SK-N-SH (cell line): ENCODE measurements at regions of chr17 and their contacts with region 1.

Region 1: DNA sequence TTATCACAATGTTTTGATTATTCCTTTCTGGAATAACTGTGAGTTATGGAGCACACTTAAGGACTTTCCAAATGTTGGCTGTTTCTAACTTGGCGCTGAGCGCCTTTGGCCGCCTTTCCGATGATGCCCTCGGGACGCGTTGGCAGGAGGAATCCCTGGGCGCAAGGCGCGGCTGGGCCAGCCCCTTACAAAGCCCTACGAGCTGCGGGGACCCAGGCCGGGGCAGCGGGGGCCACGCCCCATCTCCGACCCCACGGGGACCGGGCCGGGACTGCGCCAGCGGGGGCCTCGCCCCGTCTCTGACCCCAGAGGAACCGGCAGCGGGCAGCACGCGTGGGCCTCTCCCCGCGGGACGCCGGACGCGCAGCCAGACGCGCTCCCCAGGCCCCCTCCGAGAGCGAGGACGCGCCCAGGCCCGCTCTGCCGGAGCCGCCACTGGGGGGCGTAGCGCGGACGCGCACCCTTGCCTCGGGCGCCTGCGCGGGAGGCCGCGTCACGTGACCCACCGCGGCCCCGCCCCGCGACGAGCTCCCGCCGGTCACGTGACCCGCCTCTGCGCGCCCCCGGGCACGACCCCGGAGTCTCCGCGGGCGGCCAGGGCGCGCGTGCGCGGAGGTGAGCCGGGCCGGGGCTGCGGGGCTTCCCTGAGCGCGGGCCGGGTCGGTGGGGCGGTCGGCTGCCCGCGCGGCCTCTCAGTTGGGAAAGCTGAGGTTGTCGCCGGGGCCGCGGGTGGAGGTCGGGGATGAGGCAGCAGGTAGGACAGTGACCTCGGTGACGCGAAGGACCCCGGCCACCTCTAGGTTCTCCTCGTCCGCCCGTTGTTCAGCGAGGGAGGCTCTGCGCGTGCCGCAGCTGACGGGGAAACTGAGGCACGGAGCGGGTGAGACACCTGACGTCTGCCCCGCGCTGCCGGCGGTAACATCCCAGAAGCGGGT is at the start of gene GAA:
- DNase-seq: peak; percentile 100
- H3K4me3 ChIP-seq: peak within 1 kb of the TSS; percentile 91 to 95
- H3K27ac ChIP-seq: peak within 1 kb of the TSS; percentile 60 to 92
- H3K4me1 ChIP-seq: peaks cover 6 to 34% of the 10 kb centered on the region in 2 experiments; a peak in 3 of 4 replicates
- H3K27me3 ChIP-seq: no peaks in the 10 kb centered on the region
- CTCF ChIP-seq: peak; percentile 72
- EP300 ChIP-seq: no peak; a peak in 1 of 4 replicates
- RAD21 ChIP-seq: peak; percentile 26; the same call in 1 of the 2 replicates
- polyA plus RNA-seq, gene GAA: 19.5 and 27.3 TPM in 2 replicates

Region 2: DNA sequence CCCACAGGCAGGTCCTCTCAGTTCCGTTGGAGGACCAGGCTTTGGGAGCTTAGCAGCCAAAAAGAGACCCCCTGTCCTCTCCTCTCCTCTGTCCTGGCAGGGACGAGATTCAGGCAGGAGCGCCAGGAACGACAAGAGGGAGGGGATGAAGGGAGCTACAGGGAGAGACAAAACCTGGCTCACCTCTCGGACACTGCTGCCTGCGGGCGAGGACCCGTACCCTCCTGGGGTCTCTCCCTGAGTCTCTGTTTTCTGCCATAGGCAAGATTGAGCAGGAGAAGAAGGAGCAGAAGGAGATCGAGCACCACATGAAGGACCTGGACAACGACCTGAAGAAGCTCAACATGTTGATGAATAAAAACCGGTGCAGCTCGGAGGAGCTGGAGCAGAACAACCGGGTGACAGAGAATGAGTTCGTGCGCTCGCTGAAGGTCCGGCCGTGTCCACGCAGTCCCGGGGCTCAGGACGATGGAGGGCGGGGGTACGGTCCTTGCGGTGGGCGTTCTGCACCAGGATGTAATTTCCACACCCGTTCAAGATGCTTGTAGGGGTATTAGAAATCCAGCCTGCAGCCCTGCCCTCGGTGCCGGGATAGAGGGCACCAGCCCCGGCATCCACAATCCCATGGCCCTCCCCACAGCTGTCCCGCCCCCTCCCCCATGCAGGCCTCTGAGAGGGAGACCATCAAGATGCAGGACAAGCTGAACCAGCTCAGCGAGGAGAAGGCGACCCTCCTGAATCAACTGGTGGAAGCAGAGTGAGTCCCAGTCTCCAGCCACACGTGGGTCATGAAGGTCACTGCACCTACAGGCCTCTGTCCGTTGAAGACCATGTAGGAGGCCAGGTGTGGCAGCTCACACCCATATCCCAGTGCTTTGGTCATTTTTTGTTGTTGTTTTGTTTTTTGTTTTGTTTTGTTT is 13.7 kb before region 1 on chr17:
- CTCF ChIA-PET with region 1: interaction called, 86 read pairs
- POLR2A ChIA-PET with region 1: interaction called, 5 read pairs
- DNase-seq: peak; percentile 26
- H3K4me3 ChIP-seq: no peak overlapping the region
- H3K27ac ChIP-seq: no peak overlapping the region
- H3K4me1 ChIP-seq: peaks cover 0 to 6% of the 10 kb centered on the region in 2 experiments; a peak in 1 of 4 replicates
- H3K27me3 ChIP-seq: no peaks in the 10 kb centered on the region
- CTCF ChIP-seq: no peak
- EP300 ChIP-seq: no peak
- RAD21 ChIP-seq: no peak

Region 3: DNA sequence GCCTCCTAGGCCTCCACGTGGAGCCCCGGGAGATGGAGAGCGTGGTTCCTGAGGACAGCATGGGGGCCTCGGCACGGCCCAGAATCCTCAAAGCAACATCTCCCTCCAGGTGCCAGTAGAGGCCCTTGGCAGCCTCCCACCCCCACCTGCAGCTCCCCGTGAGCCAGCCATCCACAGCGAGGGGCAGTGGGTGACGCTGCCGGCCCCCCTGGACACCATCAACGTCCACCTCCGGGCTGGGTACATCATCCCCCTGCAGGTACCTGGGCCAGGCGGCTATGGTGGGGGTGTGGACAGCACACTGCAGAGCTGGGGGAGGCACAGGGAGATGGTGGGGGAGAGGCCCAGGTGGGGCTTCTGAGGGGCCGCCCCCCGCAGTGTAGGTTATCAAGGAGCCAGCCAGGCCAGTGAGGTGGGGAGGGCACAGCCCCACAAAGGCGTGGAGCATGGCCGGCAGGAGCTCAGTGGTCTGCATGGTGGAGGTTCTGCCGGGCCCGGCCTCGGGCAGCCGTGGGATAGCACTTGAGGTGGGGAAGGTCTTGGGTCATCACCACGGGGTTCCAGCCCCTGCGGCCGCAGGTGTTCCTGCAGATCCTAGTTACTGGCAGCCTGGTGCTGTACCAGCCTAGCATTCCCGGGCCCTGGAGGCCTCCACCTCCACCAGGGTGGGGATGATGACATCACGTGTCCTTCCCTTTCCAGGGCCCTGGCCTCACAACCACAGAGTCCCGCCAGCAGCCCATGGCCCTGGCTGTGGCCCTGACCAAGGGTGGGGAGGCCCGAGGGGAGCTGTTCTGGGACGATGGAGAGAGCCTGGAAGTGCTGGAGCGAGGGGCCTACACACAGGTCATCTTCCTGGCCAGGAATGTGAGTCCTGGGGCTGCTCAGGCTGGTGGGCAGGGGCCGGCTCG is 16.5 kb after region 1 on chr17:
- CTCF ChIA-PET with region 1: interaction called, 37 read pairs
- POLR2A ChIA-PET with region 1: interaction called, 10 read pairs
- DNase-seq: peak; percentile 44
- H3K4me3 ChIP-seq: no peak overlapping the region
- H3K27ac ChIP-seq: no peak overlapping the region
- H3K4me1 ChIP-seq: no peaks in the 10 kb centered on the region
- H3K27me3 ChIP-seq: no peaks in the 10 kb centered on the region
- CTCF ChIP-seq: no peak
- EP300 ChIP-seq: no peak
- RAD21 ChIP-seq: no peak

Region 4: DNA sequence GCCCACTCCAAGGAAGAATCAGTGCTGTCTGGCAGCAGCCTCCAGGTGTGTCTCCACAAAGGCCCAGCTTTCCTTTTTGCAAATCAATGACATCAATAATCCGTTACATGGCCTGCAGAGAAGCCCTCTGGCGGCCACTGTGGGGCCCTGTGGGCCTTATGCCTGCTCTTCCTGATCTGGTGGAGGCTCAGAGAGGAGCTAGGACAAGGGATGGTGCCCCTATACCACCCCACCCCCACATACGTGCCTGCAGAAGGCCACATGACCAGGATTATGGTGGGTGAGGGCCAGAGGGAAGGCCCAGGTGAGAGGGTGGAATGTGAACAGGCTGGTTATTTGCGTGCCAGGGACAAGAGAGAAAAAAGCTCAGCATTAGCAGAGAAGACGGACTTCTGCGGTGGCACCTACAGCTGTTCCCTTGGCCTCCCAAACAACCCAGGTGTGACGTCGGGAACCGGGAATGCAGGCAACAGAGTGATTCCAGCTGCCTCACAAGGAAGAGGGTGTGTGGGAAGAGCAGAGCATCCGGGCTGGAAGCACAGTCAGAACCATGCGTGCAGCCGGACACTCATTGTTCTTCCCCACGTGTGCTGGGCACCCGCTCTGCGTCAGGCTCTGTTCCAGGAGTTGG is 23.2 kb after region 1 on chr17:
- CTCF ChIA-PET with region 1: interaction called, 37 read pairs
- POLR2A ChIA-PET with region 1: interaction called, 5 read pairs
- DNase-seq: peak; percentile 42
- H3K4me3 ChIP-seq: no peak overlapping the region
- H3K27ac ChIP-seq: no peak overlapping the region
- H3K4me1 ChIP-seq: no peaks in the 10 kb centered on the region
- H3K27me3 ChIP-seq: no peaks in the 10 kb centered on the region
- CTCF ChIP-seq: peak; percentile 42
- EP300 ChIP-seq: no peak
- RAD21 ChIP-seq: no peak

Region 5: GRCh38 chr17:80147035-80147836 is 46.0 kb after region 1 on chr17 and contains the start of gene EIF4A3:
- CTCF ChIA-PET with region 1: interaction called, 55 read pairs
- POLR2A ChIA-PET with region 1: interaction called, 11 read pairs
- DNase-seq: peak; percentile 100
- H3K4me3 ChIP-seq: peak within 1 kb of the TSS; percentile 79 to 97
- H3K27ac ChIP-seq: peak within 1 kb of the TSS; percentile 86 to 87
- H3K4me1 ChIP-seq: peaks cover 12 to 21% of the 10 kb centered on the region in 2 experiments; a peak in 2 of 4 replicates
- H3K27me3 ChIP-seq: no peaks in the 10 kb centered on the region
- CTCF ChIP-seq: no peak; the same call in 1 of the 2 replicates
- EP300 ChIP-seq: 0 out of 4 replicates have a peak, but pooled peaks of 1 of the 2 experiments have one; percentile 4
- RAD21 ChIP-seq: peak; percentile 18; the same call in 1 of the 2 replicates
- polyA plus RNA-seq, gene EIF4A3: 173 and 335 TPM in 2 replicates

Region 6: DNA sequence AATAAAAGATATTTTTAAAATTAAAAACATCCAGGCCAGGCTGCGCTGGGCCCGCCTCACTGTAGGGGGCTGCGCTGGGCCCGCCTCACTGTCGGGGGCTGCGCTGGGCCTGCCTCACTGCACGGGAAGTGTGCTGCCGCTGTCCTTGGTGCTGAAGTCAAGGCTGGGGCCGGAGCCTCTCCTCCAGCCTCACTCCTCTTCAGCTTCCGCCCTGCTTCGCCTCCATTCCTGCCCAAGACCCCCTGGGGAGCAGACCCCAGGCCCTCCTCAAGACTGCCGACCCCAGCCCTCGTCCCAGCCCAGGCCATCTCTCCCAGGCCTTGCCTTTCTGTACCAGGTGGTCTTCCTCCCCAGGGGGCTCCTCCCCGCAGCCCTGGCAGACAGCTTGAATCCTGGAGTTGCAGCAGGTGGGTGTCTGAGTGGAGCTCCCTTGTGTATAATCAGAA is 339.9 kb after region 1 on chr17:
- CTCF ChIA-PET with region 1: no interaction called
- POLR2A ChIA-PET with region 1: no interaction called
- DNase-seq: peak; percentile 59
- H3K4me3 ChIP-seq: no peak overlapping the region
- H3K27ac ChIP-seq: no peak overlapping the region
- H3K4me1 ChIP-seq: peaks cover 0 to 10% of the 10 kb centered on the region in 2 experiments; a peak in 1 of 4 replicates
- H3K27me3 ChIP-seq: no peaks in the 10 kb centered on the region
- CTCF ChIP-seq: no peak
- EP300 ChIP-seq: no peak
- RAD21 ChIP-seq: no peak